HCT116 (cell line): ENCODE measurements at regions of chr22 and their contacts with region 1.

Region 1: GRCh38 chr22:30089655-30089974 is 9.4 kb downstream of the HORMAD2 start:
- DNase-seq: no peak
- ATAC-seq: peak; percentile 21
- H3K4me3 ChIP-seq: no peak overlapping the region
- H3K27ac ChIP-seq: peak overlapping the region; percentile 36; the same call in 1 of the 2 replicates
- H3K4me1 ChIP-seq: peaks cover 5 to 13% of the 10 kb centered on the region in 2 experiments; a peak in 3 of 4 replicates
- H3K27me3 ChIP-seq: no peaks in the 10 kb centered on the region
- CTCF ChIP-seq: no peak
- POLR2A ChIP-seq: no peak
- RAD21 ChIP-seq: no peak

Region 2: DNA sequence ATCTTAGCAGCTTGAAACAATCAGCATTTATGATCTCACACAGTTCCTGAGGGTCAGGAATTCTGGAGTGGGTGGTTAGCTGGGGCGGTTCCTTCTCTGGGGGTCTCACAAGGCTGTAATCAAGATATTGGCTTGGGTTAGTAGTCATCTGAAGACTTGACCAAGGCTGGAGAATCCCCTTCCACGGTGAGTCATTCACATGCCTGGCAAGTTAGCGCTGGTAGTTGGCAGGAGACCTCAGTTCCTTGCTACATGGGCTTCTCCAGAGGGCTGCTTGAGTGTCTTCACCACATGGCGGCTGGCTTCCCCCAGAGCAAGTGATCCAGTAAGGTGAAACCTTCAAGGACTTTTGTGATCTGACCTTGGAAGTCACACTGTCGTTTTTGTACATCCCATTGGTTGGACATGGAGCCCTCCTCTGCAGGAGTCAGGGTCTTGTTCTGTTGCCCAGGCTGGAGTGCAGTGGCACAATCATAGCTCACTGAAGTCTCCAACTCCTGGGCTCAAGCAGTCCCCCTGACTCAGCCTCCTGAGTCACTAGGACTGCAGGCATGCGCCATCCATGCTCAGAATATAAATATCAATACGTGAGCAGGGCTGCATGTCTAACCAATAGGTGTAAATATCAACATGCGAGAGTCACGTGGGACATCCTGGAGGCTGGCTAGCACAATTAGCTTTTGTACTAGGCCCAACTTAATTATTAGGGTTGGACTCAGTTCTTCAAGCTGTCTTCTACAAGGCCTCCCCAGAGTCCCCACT is 501.5 kb before region 1 on chr22:
- CTCF ChIA-PET with region 1: interaction called, 10 read pairs
- POLR2A ChIA-PET with region 1: no interaction called
- RAD21 ChIA-PET with region 1: no interaction called
- intact Hi-C with region 1: loop called (anchors 2 kb)
- DNase-seq: no peak
- ATAC-seq: peak; percentile 60; the same call in 1 of the 2 replicates
- H3K4me3 ChIP-seq: no peak overlapping the region
- H3K27ac ChIP-seq: no peak overlapping the region
- H3K4me1 ChIP-seq: peaks cover 4 to 25% of the 10 kb centered on the region in 2 experiments; a peak in 3 of 4 replicates
- H3K27me3 ChIP-seq: no peaks in the 10 kb centered on the region
- CTCF ChIP-seq: no peak
- POLR2A ChIP-seq: no peak
- RAD21 ChIP-seq: no peak

Region 3: GRCh38 chr22:29635734-29636357 is 453.8 kb before region 1 on chr22:
- CTCF ChIA-PET with region 1: interaction called, 19 read pairs
- POLR2A ChIA-PET with region 1: interaction called, 6 read pairs
- RAD21 ChIA-PET with region 1: interaction called in 1 of 2 experiments, 6 read pairs
- intact Hi-C with region 1: loop called (anchors 1 kb)
- DNase-seq: peak; percentile 34
- ATAC-seq: peak; percentile 93
- H3K4me3 ChIP-seq: no peak overlapping the region
- H3K27ac ChIP-seq: no peak overlapping the region
- H3K4me1 ChIP-seq: peaks cover 0 to 3% of the 10 kb centered on the region in 2 experiments; a peak in 1 of 4 replicates
- H3K27me3 ChIP-seq: no peaks in the 10 kb centered on the region
- CTCF ChIP-seq: peak; percentile 73
- POLR2A ChIP-seq: no peak
- RAD21 ChIP-seq: peak; percentile 78

Region 4: GRCh38 chr22:29701155-29701999 is 388.2 kb before region 1 on chr22:
- CTCF ChIA-PET with region 1: interaction called, 29 read pairs
- POLR2A ChIA-PET with region 1: interaction called, 4 read pairs
- RAD21 ChIA-PET with region 1: interaction called, 3 to 4 read pairs
- intact Hi-C with region 1: loop called (anchors 1 kb)
- DNase-seq: peak; percentile 51
- ATAC-seq: peak; percentile 74
- H3K4me3 ChIP-seq: 0 out of 4 replicates have a peak overlapping the region, but pooled peaks of 1 of the 2 experiments have one; percentile 9
- H3K27ac ChIP-seq: peak overlapping the region; percentile 38
- H3K4me1 ChIP-seq: peaks cover 36 to 41% of the 10 kb centered on the region in 2 experiments
- H3K27me3 ChIP-seq: no peaks in the 10 kb centered on the region
- CTCF ChIP-seq: peak; percentile 39 to 59 (median 51); a peak in 5 of 6 replicates
- POLR2A ChIP-seq: no peak
- RAD21 ChIP-seq: peak; percentile 67

Region 5: GRCh38 chr22:30078320-30079311 is 11.0 kb before region 1 on chr22:
- CTCF ChIA-PET with region 1: interaction called, 12 read pairs
- POLR2A ChIA-PET with region 1: no interaction called
- RAD21 ChIA-PET with region 1: no interaction called
- intact Hi-C with region 1: no loop called
- DNase-seq: no peak
- ATAC-seq: no peak
- H3K4me3 ChIP-seq: no peak overlapping the region
- H3K27ac ChIP-seq: no peak overlapping the region
- H3K4me1 ChIP-seq: no peaks in the 10 kb centered on the region
- H3K27me3 ChIP-seq: peaks cover 21% of the 10 kb centered on the region
- CTCF ChIP-seq: no peak
- POLR2A ChIP-seq: no peak
- RAD21 ChIP-seq: no peak

Region 6: DNA sequence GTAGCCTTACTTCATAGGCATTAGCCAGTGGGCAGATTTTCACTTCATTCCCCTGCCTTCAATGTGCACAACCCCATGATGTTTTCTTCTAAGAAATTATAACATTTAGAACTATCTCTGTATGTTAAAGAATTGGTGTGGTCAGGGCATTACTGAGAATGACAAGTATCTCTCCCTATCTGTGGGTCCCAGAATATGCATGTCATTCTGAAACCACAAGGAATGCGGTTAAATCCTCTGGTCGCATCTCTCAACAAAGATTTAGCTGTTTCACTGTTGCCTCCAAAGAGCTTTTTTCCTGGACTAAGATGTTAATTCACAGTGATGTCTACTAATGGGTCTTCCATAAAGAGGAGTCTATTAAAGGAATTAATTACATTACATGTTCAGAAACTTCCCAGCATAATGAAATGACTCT is 94.3 kb after region 1 on chr22:
- CTCF ChIA-PET with region 1: no interaction called
- POLR2A ChIA-PET with region 1: no interaction called
- RAD21 ChIA-PET with region 1: no interaction called
- intact Hi-C with region 1: no loop called
- DNase-seq: no peak
- ATAC-seq: no peak
- H3K4me3 ChIP-seq: no peak overlapping the region
- H3K27ac ChIP-seq: no peak overlapping the region
- H3K4me1 ChIP-seq: peaks cover 0 to 22% of the 10 kb centered on the region in 2 experiments; a peak in 2 of 4 replicates
- H3K27me3 ChIP-seq: no peaks in the 10 kb centered on the region
- CTCF ChIP-seq: no peak
- POLR2A ChIP-seq: no peak
- RAD21 ChIP-seq: no peak

Region 7: DNA sequence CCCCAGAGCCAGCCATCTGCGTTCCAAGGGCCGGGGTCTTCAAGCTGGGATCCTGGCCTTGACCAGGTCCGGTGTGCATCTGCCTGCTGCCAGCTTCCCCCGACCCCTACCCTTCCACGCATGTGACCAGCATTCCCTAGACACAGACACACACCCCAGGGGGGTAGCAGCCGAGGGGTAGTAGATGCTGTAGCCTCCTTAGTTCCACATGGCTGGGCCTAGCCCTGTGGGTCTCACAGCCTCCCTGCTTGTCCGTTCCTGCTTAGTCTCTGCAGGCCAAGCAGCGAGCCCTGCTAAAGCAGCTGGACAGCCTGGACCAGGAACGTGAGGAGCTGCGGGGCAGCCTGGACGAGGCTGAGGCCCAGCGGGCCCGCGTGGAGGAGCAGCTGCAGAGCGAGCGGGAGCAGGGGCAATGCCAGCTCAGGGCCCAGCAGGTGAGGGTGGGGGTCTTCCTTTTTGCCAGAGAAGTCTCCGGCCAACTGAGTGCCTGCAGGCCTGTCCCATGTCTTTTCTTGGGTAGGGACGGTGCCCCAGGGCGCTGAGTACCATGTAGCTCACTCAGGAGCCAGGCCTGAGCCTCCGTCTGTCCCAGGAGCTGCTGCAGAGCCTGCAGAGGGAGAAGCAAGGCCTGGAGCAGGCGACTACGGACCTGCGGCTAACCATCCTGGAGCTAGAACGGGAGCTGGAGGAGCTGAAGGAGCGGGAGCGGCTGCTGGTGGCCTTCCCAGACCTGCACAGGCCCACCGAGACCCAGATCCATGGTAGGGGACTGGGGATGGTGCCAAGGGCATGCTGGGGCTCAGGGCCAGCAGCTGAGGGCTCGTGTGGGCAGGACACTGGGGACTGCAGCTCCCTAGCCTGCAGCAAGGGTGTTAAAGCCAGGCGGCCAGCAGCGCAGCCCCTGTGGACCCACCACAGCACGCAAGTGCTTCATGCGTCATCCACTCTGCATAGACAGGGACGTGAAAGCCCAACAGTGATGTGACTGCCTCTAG is 284.0 kb after region 1 on chr22:
- CTCF ChIA-PET with region 1: no interaction called
- POLR2A ChIA-PET with region 1: no interaction called
- RAD21 ChIA-PET with region 1: no interaction called
- intact Hi-C with region 1: no loop called
- DNase-seq: no peak
- ATAC-seq: no peak
- H3K4me3 ChIP-seq: no peak overlapping the region
- H3K27ac ChIP-seq: no peak overlapping the region
- H3K4me1 ChIP-seq: no peaks in the 10 kb centered on the region
- H3K27me3 ChIP-seq: no peaks in the 10 kb centered on the region
- CTCF ChIP-seq: no peak
- POLR2A ChIP-seq: no peak
- RAD21 ChIP-seq: no peak